Activated CD8-positive, alpha-beta T cell treated with anti-CD3 and anti-CD28 coated beads for 36 hours (primary cell): ENCODE measurements at regions of chr14 and their contacts with region 1.

Region 1: GRCh38 chr14:68862954-68863594 is 70.2 kb upstream of the ZFP36L1 start:
- DNase-seq: peak; percentile 90
- ATAC-seq: peak; percentile 56
- H3K4me3 Mint-ChIP-seq: no peak overlapping the region
- H3K27ac Mint-ChIP-seq: no peak overlapping the region
- H3K4me1 Mint-ChIP-seq: no peaks in the 10 kb centered on the region
- H3K27me3 Mint-ChIP-seq: no peaks in the 10 kb centered on the region
- CTCF ChIP-seq: peak; percentile 72

Region 2: GRCh38 chr14:68685419-68686204 is 177.5 kb before region 1 on chr14:
- CTCF ChIA-PET with region 1: no interaction called
- POLR2A ChIA-PET with region 1: no interaction called
- intact Hi-C with region 1: no loop called
- DNase-seq: peak; percentile 92
- ATAC-seq: peak; percentile 90
- H3K4me3 Mint-ChIP-seq: peak overlapping the region; percentile 42
- H3K27ac Mint-ChIP-seq: peak overlapping the region; percentile 87
- H3K4me1 Mint-ChIP-seq: peaks cover 56% of the 10 kb centered on the region
- H3K27me3 Mint-ChIP-seq: no peaks in the 10 kb centered on the region
- CTCF ChIP-seq: no peak

Region 3: GRCh38 chr14:68843471-68844209 is 19.4 kb before region 1 on chr14:
- CTCF ChIA-PET with region 1: interaction called, 29 read pairs
- POLR2A ChIA-PET with region 1: no interaction called
- intact Hi-C with region 1: no loop called
- DNase-seq: peak; percentile 87
- ATAC-seq: peak; percentile 71
- H3K4me3 Mint-ChIP-seq: peak overlapping the region; percentile 22
- H3K27ac Mint-ChIP-seq: peak overlapping the region; percentile 63
- H3K4me1 Mint-ChIP-seq: peaks cover 39% of the 10 kb centered on the region
- H3K27me3 Mint-ChIP-seq: no peaks in the 10 kb centered on the region
- CTCF ChIP-seq: peak; percentile 91

Region 4: DNA sequence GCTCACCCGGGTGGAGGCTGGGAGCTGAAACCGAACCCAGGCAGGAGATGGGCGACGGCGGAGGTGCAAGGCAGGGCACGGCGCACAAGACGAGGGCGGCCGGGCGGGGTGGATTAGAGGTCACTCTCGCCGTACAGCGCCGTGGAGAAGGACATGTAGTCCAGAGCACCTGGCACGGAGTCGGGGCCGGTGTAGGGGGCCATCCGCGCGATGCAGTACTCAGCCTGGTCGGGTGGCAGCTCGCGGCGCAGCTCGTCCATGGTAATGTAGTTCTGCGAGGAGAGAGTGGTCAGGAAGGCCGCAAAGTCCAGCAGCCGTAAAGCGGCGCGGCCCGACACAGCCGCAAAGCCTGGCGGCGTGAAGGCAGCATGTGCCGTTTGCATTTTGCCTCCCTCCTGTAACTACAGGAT is 11.7 kb after region 1 on chr14:
- CTCF ChIA-PET with region 1: interaction called, 23 read pairs
- POLR2A ChIA-PET with region 1: no interaction called
- intact Hi-C with region 1: no loop called
- DNase-seq: no peak
- ATAC-seq: no peak
- H3K4me3 Mint-ChIP-seq: no peak overlapping the region
- H3K27ac Mint-ChIP-seq: no peak overlapping the region
- H3K4me1 Mint-ChIP-seq: no peaks in the 10 kb centered on the region
- H3K27me3 Mint-ChIP-seq: no peaks in the 10 kb centered on the region
- CTCF ChIP-seq: no peak

Region 5: DNA sequence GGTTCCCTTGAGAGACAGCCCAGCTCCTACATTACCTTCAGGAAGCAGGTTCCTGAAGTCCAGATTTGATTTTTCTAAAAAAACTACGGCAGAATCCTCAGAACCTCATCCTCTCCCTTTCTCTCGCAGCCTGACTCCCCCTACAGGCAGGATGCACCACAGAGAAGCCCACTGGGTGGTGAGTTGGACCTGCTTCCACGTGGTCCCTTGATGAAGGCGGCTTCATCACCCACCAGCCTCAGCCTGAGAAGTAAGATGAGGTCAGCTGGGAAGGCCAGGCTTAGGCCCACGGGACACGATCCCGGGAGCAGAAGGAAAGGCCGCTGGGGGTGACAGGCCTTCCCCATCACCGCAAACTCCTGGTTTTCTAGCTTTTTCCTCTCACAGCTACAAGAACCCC is 33.1 kb after region 1 on chr14:
- CTCF ChIA-PET with region 1: interaction called, 14 read pairs
- POLR2A ChIA-PET with region 1: no interaction called
- intact Hi-C with region 1: no loop called
- DNase-seq: no peak
- ATAC-seq: no peak
- H3K4me3 Mint-ChIP-seq: no peak overlapping the region
- H3K27ac Mint-ChIP-seq: no peak overlapping the region
- H3K4me1 Mint-ChIP-seq: peaks cover 47% of the 10 kb centered on the region
- H3K27me3 Mint-ChIP-seq: no peaks in the 10 kb centered on the region
- CTCF ChIP-seq: no peak

Region 6: DNA sequence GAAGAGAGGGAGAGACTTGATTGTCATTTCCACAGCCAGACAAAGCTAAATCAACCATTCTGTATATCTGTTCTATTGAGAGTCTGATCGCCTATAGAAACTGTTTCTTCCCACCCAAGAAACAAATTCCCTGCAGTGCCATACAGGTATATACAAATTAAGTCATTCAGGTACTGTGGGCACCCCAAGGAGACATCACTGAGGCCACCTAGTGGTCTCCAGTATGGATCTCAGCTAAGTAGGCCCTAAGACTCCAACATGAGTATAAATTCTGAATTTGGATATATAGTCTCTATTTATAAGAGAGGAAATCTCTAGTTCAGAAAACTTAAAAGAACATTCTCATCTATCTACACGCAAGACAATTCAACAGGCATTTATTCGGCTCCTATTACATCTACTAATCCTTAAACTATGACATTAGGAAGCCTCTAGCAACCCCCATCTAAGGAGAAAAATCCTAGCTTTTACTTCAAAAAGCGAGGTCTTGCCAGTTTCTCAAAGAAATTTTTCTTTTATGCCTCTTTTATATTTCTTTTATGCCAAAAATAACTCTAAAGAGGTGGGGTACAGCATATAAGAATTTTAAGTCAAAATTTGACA is 227.2 kb after region 1 on chr14:
- CTCF ChIA-PET with region 1: interaction called, 31 read pairs
- POLR2A ChIA-PET with region 1: no interaction called
- intact Hi-C with region 1: no loop called
- DNase-seq: peak; percentile 51
- ATAC-seq: peak; percentile 74
- H3K4me3 Mint-ChIP-seq: no peak overlapping the region
- H3K27ac Mint-ChIP-seq: no peak overlapping the region
- H3K4me1 Mint-ChIP-seq: peaks cover 24% of the 10 kb centered on the region
- H3K27me3 Mint-ChIP-seq: no peaks in the 10 kb centered on the region
- CTCF ChIP-seq: peak; percentile 78

Region 7: DNA sequence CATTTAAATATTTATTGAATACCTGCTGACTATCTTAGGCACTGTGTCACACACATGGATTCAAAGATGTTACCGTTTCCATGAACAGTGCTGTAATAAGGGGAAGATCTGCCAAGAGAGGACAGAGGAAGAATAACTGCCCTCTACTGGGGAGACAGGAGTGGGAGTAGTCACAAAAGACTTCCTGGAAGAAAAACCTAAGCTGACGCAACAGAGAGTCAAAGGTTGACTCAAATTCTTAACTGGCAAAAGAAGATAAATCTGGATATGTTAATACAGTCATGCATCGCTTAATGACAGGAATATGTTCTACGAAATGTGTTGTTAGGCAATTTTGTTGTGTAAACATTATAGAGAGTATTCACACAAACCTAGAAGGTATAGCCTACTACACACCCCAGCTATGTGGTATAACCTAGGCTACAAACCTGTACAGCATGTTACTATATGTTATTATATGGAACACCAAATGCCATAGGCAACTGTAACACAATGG is 238.3 kb after region 1 on chr14:
- CTCF ChIA-PET with region 1: interaction called, 40 read pairs
- POLR2A ChIA-PET with region 1: no interaction called
- intact Hi-C with region 1: loop called (anchors 5 kb)
- DNase-seq: peak; percentile 19
- ATAC-seq: peak; percentile 90
- H3K4me3 Mint-ChIP-seq: no peak overlapping the region
- H3K27ac Mint-ChIP-seq: peak overlapping the region; percentile 88
- H3K4me1 Mint-ChIP-seq: peaks cover 13% of the 10 kb centered on the region
- H3K27me3 Mint-ChIP-seq: no peaks in the 10 kb centered on the region
- CTCF ChIP-seq: peak; percentile 69

Region 8: DNA sequence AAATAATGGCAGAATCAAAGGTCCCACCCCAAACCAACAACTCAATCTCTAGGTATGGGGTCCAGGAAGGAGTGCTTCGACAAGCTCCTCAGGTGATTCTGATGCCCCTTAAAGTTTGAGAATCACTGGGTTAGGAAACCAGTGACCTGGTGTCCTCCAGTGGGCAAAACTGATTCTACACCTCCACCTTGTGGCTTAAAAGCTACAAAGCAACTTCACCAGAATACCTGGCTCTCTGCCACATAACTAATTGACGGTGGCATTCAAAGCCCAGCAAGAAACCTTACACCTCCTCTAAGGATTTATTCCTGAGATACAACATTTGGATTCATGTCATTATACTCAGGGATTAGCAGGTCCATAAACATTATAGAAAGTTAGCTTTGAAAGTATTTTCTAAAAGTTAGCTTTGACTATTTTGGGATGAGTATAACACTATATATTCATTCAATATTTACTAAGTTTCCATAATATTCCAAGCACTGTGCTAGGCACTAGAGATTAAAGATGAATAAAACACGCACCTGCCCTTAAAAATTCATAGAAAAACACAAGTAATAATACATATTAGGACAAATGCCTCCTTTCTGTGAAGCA is 244.4 kb after region 1 on chr14:
- CTCF ChIA-PET with region 1: interaction called, 42 read pairs
- POLR2A ChIA-PET with region 1: no interaction called
- intact Hi-C with region 1: loop called (anchors 5 kb)
- DNase-seq: peak; percentile 46
- ATAC-seq: peak; percentile 75
- H3K4me3 Mint-ChIP-seq: no peak overlapping the region
- H3K27ac Mint-ChIP-seq: peak overlapping the region; percentile 19
- H3K4me1 Mint-ChIP-seq: peaks cover 5% of the 10 kb centered on the region
- H3K27me3 Mint-ChIP-seq: no peaks in the 10 kb centered on the region
- CTCF ChIP-seq: peak; percentile 67